ENCODE measurements at regions of chr15 and their contacts with region 1.

Region 1: DNA sequence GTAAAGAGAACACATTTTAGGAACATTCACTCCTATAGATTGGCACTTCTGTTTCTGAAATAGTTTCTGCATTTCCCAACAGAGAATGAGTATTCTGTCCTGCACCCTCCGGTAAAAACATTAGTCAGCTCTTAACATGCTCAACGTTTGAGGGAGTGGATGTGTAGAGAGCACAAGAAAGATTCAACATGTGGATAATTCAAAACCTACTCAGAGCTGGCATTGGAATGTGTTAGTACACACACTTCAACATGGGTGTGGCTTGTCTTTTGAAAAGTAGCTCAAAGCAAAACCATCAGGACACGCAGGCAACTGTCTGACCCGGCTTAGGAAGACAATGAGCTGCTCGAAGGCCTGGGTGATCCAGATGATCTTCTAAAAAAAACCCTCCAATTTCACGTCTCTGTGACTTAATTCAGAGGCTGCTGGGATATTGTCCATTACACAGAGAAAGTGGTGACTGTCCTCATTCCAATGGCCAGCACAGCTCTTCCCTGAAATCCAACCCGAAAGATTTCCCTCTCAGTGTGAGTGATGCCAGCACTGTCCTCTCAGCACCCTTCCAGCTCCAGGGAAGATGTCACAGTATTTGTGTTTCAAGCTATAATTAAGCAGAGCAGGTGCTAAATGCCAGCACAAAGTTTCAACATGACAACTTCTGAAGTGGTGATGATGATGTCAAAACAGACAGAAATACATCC is 18.1 kb downstream of the FBN1 start:
- DNase-seq: no peak
- ATAC-seq: peak in 3 of 4 donors; percentile 21 to 57 (median 35)
- H3K4me3 ChIP-seq: peak overlapping the region in 1 of 12 donors; percentile 1
- H3K27ac ChIP-seq: peak overlapping the region in 2 of 12 donors; percentile 9 to 28
- H3K4me1 ChIP-seq: peaks cover 0 to 77% (median 7%) of the 10 kb centered on the region in 12 donors
- H3K27me3 ChIP-seq: no peaks in the 10 kb centered on the region
- CTCF ChIP-seq: no peak
- POLR2A ChIP-seq: no peak

Region 2: GRCh38 chr15:48507416-48508065 is 119.9 kb before region 1 on chr15:
- intact Hi-C with region 1: loop called in 1 of 10 experiments (anchors 10 kb)
- DNase-seq: no peak
- ATAC-seq: peak in 2 of 4 donors; percentile 39 to 55
- H3K4me3 ChIP-seq: no peak overlapping the region
- H3K27ac ChIP-seq: no peak overlapping the region
- H3K4me1 ChIP-seq: peaks cover 0 to 16% (median 0%) of the 10 kb centered on the region in 12 donors
- H3K27me3 ChIP-seq: no peaks in the 10 kb centered on the region
- CTCF ChIP-seq: peak; percentile 38 to 63 (median 50)
- POLR2A ChIP-seq: no peak

Region 3: GRCh38 chr15:48559285-48559684 is 68.1 kb before region 1 on chr15:
- intact Hi-C with region 1: loop called in 3 of 10 experiments (anchors 5 to 10 kb)
- DNase-seq: peak in 2 of 5 donors; percentile 30 to 39
- ATAC-seq: peak in 3 of 4 donors; percentile 19 to 57 (median 33)
- H3K4me3 ChIP-seq: no peak overlapping the region
- H3K27ac ChIP-seq: peak overlapping the region in 8 of 12 donors; percentile 1 to 38 (median 24)
- H3K4me1 ChIP-seq: peaks cover 0 to 68% (median 8%) of the 10 kb centered on the region in 12 donors
- H3K27me3 ChIP-seq: no peaks in the 10 kb centered on the region
- CTCF ChIP-seq: no peak
- POLR2A ChIP-seq: no peak

Region 4: DNA sequence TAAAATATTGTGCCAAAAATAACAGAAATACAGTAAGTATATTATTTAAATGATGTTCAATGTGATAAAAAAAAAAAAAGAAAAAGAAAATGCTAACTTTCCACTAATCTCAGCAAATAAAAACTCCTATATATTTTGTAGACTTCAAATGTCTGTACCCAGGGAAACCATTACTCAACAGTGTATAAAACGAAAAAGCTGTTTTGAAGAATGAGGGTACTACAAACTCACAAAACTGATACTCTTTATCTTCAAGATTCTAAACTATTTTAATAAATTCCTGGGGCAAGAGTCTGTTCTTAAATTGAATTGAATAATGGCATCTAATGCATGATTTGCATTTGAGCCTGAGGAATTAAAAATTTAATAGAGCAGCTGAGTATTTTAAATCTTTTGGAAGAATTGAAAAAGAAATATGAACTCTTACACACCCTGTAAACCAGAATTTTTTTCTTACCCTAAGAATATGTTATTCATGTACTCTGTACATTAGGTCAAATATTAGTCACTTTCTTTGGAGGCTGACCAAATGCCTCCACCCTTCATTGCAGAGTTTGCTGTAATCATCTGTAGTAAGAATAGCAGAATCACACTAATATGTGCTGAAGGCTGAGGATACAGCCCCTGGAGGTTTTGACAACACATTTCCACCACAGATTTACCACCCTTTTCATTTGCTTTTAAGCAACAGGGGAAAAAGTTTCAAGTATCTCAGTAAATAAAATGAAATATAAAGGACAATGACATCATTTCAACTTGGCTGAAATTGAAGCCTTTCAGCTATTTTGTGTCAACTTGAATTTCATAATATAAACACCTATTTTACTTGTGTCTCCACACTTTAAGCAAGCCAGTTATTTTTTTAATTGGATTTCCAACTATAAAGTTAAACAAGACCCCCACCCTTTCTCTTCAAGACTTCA is 61.6 kb before region 1 on chr15:
- intact Hi-C with region 1: loop called in 2 of 10 experiments (anchors 10 kb)
- DNase-seq: no peak
- ATAC-seq: peak in 3 of 4 donors; percentile 54 to 80 (median 65)
- H3K4me3 ChIP-seq: no peak overlapping the region
- H3K27ac ChIP-seq: peak overlapping the region in 3 of 12 donors; percentile 0 to 29 (median 13)
- H3K4me1 ChIP-seq: peaks cover 0 to 37% (median 9%) of the 10 kb centered on the region in 12 donors
- H3K27me3 ChIP-seq: no peaks in the 10 kb centered on the region
- CTCF ChIP-seq: no peak
- POLR2A ChIP-seq: no peak

Region 5: GRCh38 chr15:48582452-48583247 is 44.8 kb before region 1 on chr15:
- intact Hi-C with region 1: loop called in 1 of 10 experiments (anchors 5 kb)
- DNase-seq: peak in 1 of 5 donors; percentile 35
- ATAC-seq: peak in 1 of 4 donors; percentile 42
- H3K4me3 ChIP-seq: no peak overlapping the region
- H3K27ac ChIP-seq: peak overlapping the region in 3 of 12 donors; percentile 1 to 46 (median 22)
- H3K4me1 ChIP-seq: peaks cover 0 to 72% (median 15%) of the 10 kb centered on the region in 12 donors
- H3K27me3 ChIP-seq: no peaks in the 10 kb centered on the region
- CTCF ChIP-seq: no peak
- POLR2A ChIP-seq: no peak

Region 6: DNA sequence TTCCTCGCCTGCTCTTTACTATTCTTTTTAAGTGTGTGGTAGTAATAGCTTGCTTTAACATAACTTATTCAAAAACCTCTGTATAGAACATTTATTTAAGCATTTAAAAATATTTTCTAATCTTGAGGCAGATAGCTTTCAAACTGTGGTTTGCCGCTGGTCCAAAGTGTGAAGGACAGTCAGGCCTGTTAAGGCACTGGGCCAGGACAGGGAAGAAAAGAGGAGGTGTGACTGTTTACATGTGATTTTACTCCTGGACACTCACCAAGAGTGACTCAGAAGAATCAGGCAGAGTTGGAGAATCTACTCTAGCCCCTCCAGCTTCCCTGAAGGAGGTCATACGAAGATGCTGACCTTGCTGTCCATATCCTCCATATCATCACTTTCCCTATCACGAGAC is 138.8 kb after region 1 on chr15:
- intact Hi-C with region 1: no loop called
- DNase-seq: no peak
- ATAC-seq: no peak
- H3K4me3 ChIP-seq: no peak overlapping the region
- H3K27ac ChIP-seq: no peak overlapping the region
- H3K4me1 ChIP-seq: peaks cover 0 to 4% (median 0%) of the 10 kb centered on the region in 12 donors
- H3K27me3 ChIP-seq: no peaks in the 10 kb centered on the region
- CTCF ChIP-seq: no peak
- POLR2A ChIP-seq: no peak

Measured in heart left ventricle (tissue), 16 donors.